ENCODE measurements at regions of chr19 and their contacts with region 1.

Region 1: DNA sequence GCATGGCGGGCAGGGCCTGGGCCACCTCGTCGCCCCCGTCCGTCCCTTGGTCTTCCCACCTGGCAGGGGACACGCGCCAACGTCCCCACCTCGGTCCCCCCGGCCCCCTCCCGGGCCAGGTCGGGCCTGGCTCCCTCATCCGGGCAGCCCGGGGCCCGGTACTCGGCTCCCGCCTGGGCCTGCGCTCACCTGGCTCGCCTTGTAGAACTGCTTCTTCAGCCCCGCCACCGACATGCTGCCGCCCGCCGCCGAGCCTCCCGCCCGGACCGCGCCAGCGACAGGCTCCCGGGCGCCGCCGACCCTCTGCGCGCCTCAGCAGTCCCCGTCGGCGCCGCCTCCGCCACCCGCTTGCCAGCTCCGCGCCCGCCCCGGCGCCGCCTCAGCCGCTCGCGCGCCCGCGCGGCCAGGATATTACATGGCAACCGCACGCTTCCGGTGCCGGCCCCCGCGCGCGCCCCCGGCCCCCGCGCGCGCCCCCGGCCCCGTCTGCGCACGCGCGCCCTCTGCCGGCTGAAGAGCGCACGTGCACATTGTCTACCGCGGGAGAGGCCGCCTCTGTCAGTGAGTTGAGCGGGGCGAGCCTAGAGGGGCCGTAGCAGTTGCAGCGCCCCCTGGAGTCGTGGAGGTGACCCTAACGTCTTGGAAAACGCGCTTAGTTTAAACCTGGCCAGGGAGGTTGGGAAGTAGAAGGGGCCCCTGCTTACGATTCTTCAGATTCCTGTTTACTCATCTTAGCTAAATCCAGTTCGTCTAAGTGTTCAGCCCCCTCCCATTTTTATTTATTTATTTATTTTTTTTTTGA is at the start of gene SH3GL1:
- DNase-seq: peak; percentile 91 to 92
- ATAC-seq: peak; percentile 70 to 74
- H3K4me3 ChIP-seq: peak within 1 kb of the TSS; percentile 88 to 97 (median 93)
- H3K27ac ChIP-seq: peak within 1 kb of the TSS; percentile 96 to 98 (median 97)
- H3K4me1 ChIP-seq: peaks cover 34 to 46% of the 10 kb centered on the region in 2 donors
- H3K27me3 ChIP-seq: no peaks in the 10 kb centered on the region
- CTCF ChIP-seq: peak; percentile 92 to 99 (median 98)
- POLR2A ChIP-seq: peak; percentile 92 to 98
- total RNA-seq, gene SH3GL1: 11.6 to 19.4 (median 15.8) TPM

Region 2: GRCh38 chr19:4246767-4247593 is 153.4 kb before region 1 on chr19 and contains the start of gene YJU2:
- in situ Hi-C with region 1: loop called in 1 of 4 experiments (anchors 25 kb)
- intact Hi-C with region 1: loop called (anchors 2 kb)
- DNase-seq: peak; percentile 98 to 99
- ATAC-seq: peak; percentile 99
- H3K4me3 ChIP-seq: peak within 1 kb of the TSS; percentile 57 to 87 (median 76)
- H3K27ac ChIP-seq: peak within 1 kb of the TSS; percentile 85 to 99 (median 95)
- H3K4me1 ChIP-seq: peaks cover 7 to 11% of the 10 kb centered on the region in 2 donors
- H3K27me3 ChIP-seq: peaks cover 0 to 3% (median 0%) of the 10 kb centered on the region in 3 donors
- CTCF ChIP-seq: peak in 4 of 5 experiments; percentile 23 to 38 (median 34)
- POLR2A ChIP-seq: peak; percentile 36 to 42
- total RNA-seq, gene YJU2: 13.5 to 37.8 (median 19.9) TPM

Region 3: DNA sequence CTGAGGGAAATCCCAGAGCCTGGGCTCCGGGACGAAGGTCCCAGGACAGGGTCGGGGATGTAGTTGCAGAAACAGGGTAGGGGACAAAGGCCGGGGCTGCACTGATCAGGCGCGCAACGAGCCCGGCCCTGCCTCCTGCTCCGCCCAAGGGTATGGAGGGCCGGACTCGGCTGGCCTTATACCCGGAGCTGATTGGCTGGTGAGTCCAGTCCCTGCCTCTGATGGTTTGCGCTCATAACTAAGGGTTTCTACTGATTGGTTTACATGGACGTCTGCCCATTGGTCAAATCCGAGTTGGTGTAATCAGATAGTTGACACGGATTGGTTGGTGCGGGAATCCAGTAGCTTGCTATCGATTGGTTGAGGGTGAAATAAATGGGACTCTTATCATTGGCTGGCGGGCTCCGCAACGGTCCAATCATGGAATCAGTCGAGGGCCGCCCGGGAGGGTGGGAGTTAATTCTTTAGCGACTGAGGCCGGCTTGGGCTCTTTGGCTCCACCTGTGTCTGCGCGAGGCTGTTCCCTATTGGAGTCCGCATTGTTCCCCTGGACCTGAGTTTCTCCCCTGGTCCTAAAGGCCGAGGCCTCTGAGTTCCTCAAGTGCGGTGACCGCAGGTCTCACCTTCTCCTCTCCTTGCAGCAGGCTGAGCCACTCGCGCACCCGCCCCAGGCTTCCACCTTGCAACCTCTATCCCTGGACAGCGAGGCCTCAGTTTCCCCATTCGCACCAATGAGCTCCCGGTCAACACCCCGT is 57.5 kb before region 1 on chr19:
- in situ Hi-C with region 1: no loop called
- intact Hi-C with region 1: loop called (anchors 1 kb)
- DNase-seq: peak; percentile 98 to 99
- ATAC-seq: peak; percentile 97 to 98
- H3K4me3 ChIP-seq: peak overlapping the region; percentile 64 to 78 (median 68)
- H3K27ac ChIP-seq: peak overlapping the region; percentile 89 to 96 (median 94)
- H3K4me1 ChIP-seq: peaks cover 10 to 20% of the 10 kb centered on the region in 2 donors
- H3K27me3 ChIP-seq: no peaks in the 10 kb centered on the region
- CTCF ChIP-seq: peak in 1 of 5 experiments; percentile 16
- POLR2A ChIP-seq: peak; percentile 73 to 85

Region 4: DNA sequence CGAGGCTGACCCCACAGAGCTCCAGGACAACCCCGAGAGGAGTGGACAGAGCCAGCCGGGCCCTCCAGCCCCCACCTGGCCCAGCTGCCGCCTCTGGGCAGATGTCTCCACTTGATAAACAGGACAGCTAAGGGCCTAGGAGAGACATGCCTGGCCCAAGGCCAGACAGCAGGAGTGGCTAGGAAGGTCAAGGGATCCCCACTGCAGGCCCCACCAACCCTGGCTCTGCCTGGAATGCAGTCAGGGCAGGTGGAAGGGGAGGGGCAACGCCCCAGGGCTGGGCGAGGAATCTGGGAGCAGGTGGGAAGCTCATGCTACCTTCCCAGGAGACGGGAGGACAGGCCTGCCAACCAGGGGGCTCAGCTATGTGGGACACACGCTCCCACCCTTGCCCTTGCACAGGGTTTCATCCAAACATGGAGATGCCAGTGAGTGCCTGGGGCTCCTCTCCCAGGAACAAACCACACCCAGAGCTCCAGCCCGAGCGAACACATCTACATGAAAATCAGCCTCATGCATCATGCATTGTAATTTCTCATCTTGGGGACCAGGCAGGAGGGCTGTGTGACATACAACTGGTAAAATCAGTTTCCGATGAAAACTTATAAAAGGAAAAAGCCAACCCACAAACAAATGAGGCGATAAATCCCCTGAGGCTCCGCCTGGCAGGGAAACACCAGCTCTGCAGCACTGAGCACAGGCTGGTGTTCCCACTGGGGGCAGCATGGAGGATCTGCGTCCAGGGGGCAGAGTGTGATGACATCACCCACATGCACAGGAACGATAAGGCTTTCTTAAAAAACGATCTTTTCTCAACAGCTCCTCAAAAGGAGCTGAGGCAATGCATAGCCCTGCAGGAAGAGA is 24.9 kb before region 1 on chr19:
- in situ Hi-C with region 1: no loop called
- intact Hi-C with region 1: loop called (anchors 1 kb)
- DNase-seq: peak in 1 of 2 donors; percentile 41
- ATAC-seq: no peak
- H3K4me3 ChIP-seq: peak overlapping the region in 1 of 4 donors; percentile 4
- H3K27ac ChIP-seq: peak overlapping the region; percentile 83 to 95 (median 92)
- H3K4me1 ChIP-seq: peaks cover 99 to 100% of the 10 kb centered on the region in 2 donors
- H3K27me3 ChIP-seq: no peaks in the 10 kb centered on the region
- CTCF ChIP-seq: no peak
- POLR2A ChIP-seq: no peak

Region 5: GRCh38 chr19:4415352-4415751 is 15.0 kb after region 1 on chr19:
- in situ Hi-C with region 1: no loop called
- intact Hi-C with region 1: no loop called
- DNase-seq: no peak
- ATAC-seq: no peak
- H3K4me3 ChIP-seq: no peak overlapping the region
- H3K27ac ChIP-seq: no peak overlapping the region
- H3K4me1 ChIP-seq: peaks cover 0 to 9% of the 10 kb centered on the region in 2 donors
- H3K27me3 ChIP-seq: no peaks in the 10 kb centered on the region
- CTCF ChIP-seq: no peak
- POLR2A ChIP-seq: no peak

Region 6: GRCh38 chr19:4457654-4458395 is 57.5 kb after region 1 on chr19 and contains the start of gene UBXN6:
- in situ Hi-C with region 1: no loop called
- intact Hi-C with region 1: loop called (anchors 2 kb)
- DNase-seq: peak; percentile 96 to 97
- ATAC-seq: peak; percentile 86
- H3K4me3 ChIP-seq: peak within 1 kb of the TSS; percentile 56 to 90 (median 68)
- H3K27ac ChIP-seq: peak within 1 kb of the TSS; percentile 90 to 99 (median 95)
- H3K4me1 ChIP-seq: peaks cover 24 to 29% of the 10 kb centered on the region in 2 donors
- H3K27me3 ChIP-seq: no peaks in the 10 kb centered on the region
- CTCF ChIP-seq: peak in 2 of 5 experiments; percentile 8 to 34
- POLR2A ChIP-seq: no peak
- total RNA-seq, gene UBXN6: 93.8 to 230 (median 114) TPM